ENCODE measurements at regions of chr11 and their contacts with region 1.

Region 1: DNA sequence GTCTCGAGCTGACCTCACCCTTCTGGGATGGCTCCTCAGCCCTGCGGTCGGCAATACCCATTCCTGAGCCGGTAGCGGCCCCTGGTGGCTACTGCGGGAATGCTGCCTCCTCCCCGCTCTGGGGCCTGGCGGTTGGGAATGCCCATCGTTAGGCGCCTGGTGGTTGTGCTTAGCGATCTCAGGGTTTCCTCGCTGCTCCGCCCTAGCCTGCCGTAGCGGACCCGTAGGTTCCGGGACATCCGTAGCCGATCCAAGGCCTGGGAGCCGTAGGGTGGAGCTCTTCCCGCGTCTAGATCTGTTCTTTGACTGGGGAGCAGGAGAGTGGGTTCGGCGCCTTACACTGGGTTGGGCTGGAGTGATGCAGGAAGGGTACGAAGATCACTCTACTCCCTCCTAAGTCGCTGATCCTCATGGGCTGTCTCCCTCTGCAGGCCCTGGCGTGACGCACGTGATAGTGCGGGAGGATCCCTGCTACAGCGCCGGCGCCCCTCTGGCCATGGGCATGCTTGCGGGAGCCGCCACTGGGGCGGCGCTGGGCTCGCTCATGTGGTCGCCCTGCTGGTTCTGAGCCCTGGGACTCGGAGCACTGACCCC is 14.8 kb downstream of the PLEKHB1 start:
- DNase-seq: peak; percentile 78 to 99
- ATAC-seq: peak; percentile 85 to 98
- H3K4me3 ChIP-seq: peak overlapping the region; percentile 21; the same call in 2 of the 3 replicates
- H3K27ac ChIP-seq: peak overlapping the region; percentile 42 to 62; a peak in 5 of 6 replicates
- H3K4me1 ChIP-seq: no peaks in the 10 kb centered on the region
- CTCF ChIP-seq: peak; percentile 93
- EP300 ChIP-seq: no peak
- POLR2A ChIP-seq: no peak
- RAD21 ChIP-seq: peak; percentile 98 to 99

Region 2: GRCh38 chr11:73201249-73201648 is 459.9 kb before region 1 on chr11:
- CTCF ChIA-PET with region 1: no interaction called
- POLR2A ChIA-PET with region 1: no interaction called
- DNase-seq: no peak
- ATAC-seq: no peak
- H3K4me3 ChIP-seq: no peak overlapping the region
- H3K27ac ChIP-seq: no peak overlapping the region
- H3K4me1 ChIP-seq: peaks cover 29% of the 10 kb centered on the region
- CTCF ChIP-seq: no peak
- EP300 ChIP-seq: no peak
- POLR2A ChIP-seq: no peak
- RAD21 ChIP-seq: no peak

Region 3: DNA sequence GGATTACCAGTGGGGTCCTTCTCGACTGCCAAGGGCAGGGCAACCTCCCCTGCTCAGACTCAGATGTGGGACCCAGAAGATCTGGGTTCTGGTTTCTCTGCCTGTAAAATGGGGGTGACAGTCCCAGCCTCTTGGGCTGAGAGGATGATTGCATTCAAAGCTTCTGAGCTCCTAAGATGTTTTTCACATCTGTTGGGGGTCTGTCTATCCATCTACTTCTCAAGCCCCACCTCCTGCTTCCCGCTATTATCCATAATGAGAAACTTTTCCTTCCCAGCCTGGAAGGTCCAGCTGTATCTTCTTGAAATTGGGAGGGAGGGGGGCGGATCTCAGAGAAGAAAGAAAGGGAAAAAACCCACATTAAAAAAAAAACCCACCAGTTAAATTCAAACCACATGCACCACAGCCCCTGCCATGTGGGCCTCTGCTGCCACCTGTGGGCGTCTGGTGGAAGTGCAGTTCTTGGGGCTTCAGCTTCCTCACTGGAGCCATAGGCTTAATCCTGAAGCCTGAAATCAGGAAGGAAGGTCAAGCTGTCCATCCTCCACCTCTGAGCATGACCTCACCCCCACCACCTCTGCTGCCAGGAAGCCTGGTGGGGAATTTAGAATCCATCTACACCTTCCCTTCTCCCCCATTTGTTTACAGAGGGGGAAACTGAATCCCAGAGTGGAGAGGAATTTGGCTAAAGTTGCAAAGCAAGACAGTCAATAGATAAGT is 325.8 kb before region 1 on chr11:
- CTCF ChIA-PET with region 1: interaction called, 23 read pairs
- POLR2A ChIA-PET with region 1: no interaction called
- DNase-seq: peak; percentile 73 to 93
- ATAC-seq: peak; percentile 72 to 83
- H3K4me3 ChIP-seq: no peak overlapping the region
- H3K27ac ChIP-seq: peak overlapping the region; percentile 62 to 80
- H3K4me1 ChIP-seq: peaks cover 38% of the 10 kb centered on the region
- CTCF ChIP-seq: peak; percentile 97
- EP300 ChIP-seq: no peak
- POLR2A ChIP-seq: no peak
- RAD21 ChIP-seq: peak; percentile 93 to 95

Region 4: DNA sequence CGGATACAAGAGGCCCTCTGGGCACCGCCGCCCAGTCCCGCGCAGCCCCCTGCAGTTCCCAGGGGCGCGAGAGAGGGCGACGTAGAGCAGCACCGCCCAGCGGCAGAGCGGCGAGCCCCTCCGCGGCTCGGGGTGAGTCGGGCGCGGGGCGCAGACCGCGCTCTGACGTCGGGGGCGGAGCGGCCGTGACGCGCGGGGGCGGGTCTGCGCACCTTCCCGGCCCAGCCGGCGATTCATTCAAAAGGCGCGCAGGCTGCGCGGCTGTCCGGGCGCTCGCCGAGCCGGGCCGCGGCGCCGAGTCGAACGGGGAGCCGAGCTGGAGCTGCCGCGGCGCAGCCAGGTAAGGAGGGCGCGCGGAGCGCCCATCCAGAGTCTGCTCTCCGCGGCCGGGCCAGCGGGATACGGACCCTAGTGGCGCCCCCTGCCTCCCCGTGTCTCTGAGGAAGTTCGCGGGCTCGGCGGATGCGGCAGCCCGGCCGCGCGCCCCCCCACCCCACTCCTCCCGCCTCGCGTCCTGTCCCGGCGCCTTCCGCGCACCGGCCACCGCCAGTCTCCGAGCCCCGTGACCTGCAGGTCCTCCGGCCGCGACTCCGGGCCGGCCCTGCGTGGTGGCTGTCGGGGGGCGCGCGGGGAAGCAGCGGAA is 284.9 kb before region 1 on chr11 and contains the start of gene RELT:
- CTCF ChIA-PET with region 1: interaction called, 10 read pairs
- POLR2A ChIA-PET with region 1: no interaction called
- DNase-seq: peak; percentile 89 to 91
- ATAC-seq: peak; percentile 83 to 84
- H3K4me3 ChIP-seq: peak within 1 kb of the TSS; percentile 59
- H3K27ac ChIP-seq: peak within 1 kb of the TSS; percentile 75 to 93
- H3K4me1 ChIP-seq: peaks cover 23% of the 10 kb centered on the region
- CTCF ChIP-seq: peak; percentile 73
- EP300 ChIP-seq: no peak
- POLR2A ChIP-seq: peak; percentile 98
- RAD21 ChIP-seq: peak; percentile 38 to 44; a peak in 3 of 5 replicates
- polyA plus RNA-seq, gene RELT: 2.9 TPM in 2 replicates

Region 5: GRCh38 chr11:73404048-73404447 is 257.1 kb before region 1 on chr11:
- CTCF ChIA-PET with region 1: interaction called, 129 read pairs
- POLR2A ChIA-PET with region 1: no interaction called
- DNase-seq: peak; percentile 59 to 63
- ATAC-seq: peak; percentile 74 to 88
- H3K4me3 ChIP-seq: no peak overlapping the region
- H3K27ac ChIP-seq: no peak overlapping the region
- H3K4me1 ChIP-seq: no peaks in the 10 kb centered on the region
- CTCF ChIP-seq: peak; percentile 45
- EP300 ChIP-seq: no peak
- POLR2A ChIP-seq: no peak
- RAD21 ChIP-seq: peak; percentile 48 to 73

Region 6: GRCh38 chr11:73625696-73626318 is 35.3 kb before region 1 on chr11:
- CTCF ChIA-PET with region 1: interaction called, 167 read pairs
- POLR2A ChIA-PET with region 1: interaction called, 4 read pairs
- DNase-seq: peak; percentile 74 to 97
- ATAC-seq: peak; percentile 95 to 96
- H3K4me3 ChIP-seq: peak overlapping the region; percentile 32
- H3K27ac ChIP-seq: peak overlapping the region; percentile 36 to 66; a peak in 5 of 6 replicates
- H3K4me1 ChIP-seq: no peaks in the 10 kb centered on the region
- CTCF ChIP-seq: peak; percentile 83
- EP300 ChIP-seq: no peak
- POLR2A ChIP-seq: no peak
- RAD21 ChIP-seq: peak; percentile 77 to 86

Region 7: DNA sequence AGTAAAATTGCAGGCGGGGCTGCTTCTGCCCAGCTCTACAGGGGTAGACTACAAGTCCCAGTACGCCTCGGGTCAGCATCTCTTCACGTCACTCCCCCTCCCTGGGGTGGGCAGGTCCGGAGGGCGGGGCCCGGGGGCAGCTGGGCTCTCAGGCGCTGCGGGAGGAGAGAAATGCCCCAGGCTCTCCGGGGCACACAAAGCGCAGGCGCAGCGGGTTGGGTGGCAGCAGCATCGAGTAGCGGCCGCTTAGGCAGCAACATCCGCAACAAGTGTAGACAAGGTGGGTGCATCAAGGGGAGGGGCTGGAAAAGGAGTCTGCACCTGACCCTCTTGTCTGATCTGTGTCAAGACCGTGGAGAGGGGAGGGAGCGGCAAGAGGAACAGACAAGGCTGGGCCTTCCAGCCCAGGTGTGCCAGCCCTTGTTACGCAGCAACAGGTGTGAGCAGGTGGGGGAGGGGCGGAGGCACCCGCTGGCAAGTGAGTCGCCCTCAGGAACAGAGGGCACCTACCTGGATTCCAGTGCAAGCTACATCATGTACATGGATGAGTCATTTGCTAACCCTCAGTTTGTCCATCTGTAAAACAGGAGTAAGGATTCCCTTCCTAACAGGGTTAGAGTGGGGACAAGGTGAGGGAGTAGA is 13.6 kb before region 1 on chr11:
- CTCF ChIA-PET with region 1: interaction called, 81 read pairs
- POLR2A ChIA-PET with region 1: no interaction called
- DNase-seq: peak; percentile 58 to 62
- ATAC-seq: peak; percentile 81 to 89
- H3K4me3 ChIP-seq: peak overlapping the region; percentile 18; the same call in 1 of the 3 replicates
- H3K27ac ChIP-seq: 0 out of 6 replicates have a peak overlapping the region, but pooled peaks of 1 of the 2 experiments have one; percentile 14
- H3K4me1 ChIP-seq: no peaks in the 10 kb centered on the region
- CTCF ChIP-seq: no peak
- EP300 ChIP-seq: no peak
- POLR2A ChIP-seq: no peak
- RAD21 ChIP-seq: no peak

Region 8: DNA sequence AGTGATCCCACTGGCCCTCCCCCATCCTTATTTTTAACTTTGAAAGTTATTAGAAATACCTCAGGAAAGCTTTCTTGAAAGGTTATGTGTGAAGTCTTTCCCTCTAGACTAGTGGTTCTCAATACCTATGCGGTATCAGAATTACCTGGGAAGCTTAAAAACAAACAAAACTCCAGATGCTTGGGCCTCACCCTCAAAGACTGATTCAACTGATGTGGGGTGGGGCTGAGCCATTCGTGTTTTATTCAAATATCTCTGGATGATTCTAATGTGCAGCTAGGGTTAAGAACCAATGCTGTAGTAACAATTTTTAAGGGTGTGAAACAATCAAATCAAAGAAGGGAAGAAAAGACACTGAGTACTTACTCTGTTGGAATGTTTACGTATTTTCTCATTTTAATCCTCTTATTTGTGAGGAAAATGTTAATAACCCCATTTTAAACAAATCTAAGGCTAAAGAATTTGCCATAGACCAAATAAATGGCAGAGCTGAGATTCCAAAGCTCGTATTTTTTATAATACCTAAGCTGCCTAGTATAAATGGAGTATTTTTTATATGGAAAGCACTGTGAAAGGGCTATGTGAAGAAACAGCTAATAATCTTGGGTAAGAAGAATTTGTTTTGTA is 32.9 kb after region 1 on chr11:
- CTCF ChIA-PET with region 1: interaction called, 12 read pairs
- POLR2A ChIA-PET with region 1: no interaction called
- DNase-seq: no peak
- ATAC-seq: no peak
- H3K4me3 ChIP-seq: no peak overlapping the region
- H3K27ac ChIP-seq: no peak overlapping the region
- H3K4me1 ChIP-seq: no peaks in the 10 kb centered on the region
- CTCF ChIP-seq: no peak
- EP300 ChIP-seq: no peak
- POLR2A ChIP-seq: no peak
- RAD21 ChIP-seq: no peak

Region 9: GRCh38 chr11:73876424-73877300 is 215.5 kb after region 1 on chr11 and contains the starts of genes COA4 and PAAF1:
- CTCF ChIA-PET with region 1: no interaction called
- POLR2A ChIA-PET with region 1: no interaction called
- DNase-seq: peak; percentile 96 to 98
- ATAC-seq: peak; percentile 98
- H3K4me3 ChIP-seq: peak within 1 kb of the TSS; percentile 73
- H3K27ac ChIP-seq: peak within 1 kb of the TSS; percentile 92 to 94
- H3K4me1 ChIP-seq: peaks cover 17% of the 10 kb centered on the region
- CTCF ChIP-seq: no peak
- EP300 ChIP-seq: no peak
- POLR2A ChIP-seq: peak; percentile 77
- RAD21 ChIP-seq: no peak
- polyA plus RNA-seq, gene COA4: 126 and 143 TPM in 2 replicates
- polyA plus RNA-seq, gene PAAF1: 24.9 and 25.1 TPM in 2 replicates

Measured in A549 (cell line).